ENCODE measurements at regions of chr2 and their contacts with region 1.

Region 1: GRCh38 chr2:10448208-10448645 is at the start of gene ODC1:
- DNase-seq: peak; percentile 97 to 98 (median 98)
- ATAC-seq: peak; percentile 87 to 94
- H3K4me3 ChIP-seq: peak within 1 kb of the TSS; percentile 80
- H3K27ac ChIP-seq: peak within 1 kb of the TSS; percentile 89
- H3K4me1 ChIP-seq: peaks cover 2% of the 10 kb centered on the region
- H3K27me3 ChIP-seq: no peaks in the 10 kb centered on the region
- total RNA-seq, gene ODC1: 35.2 to 47.9 (median 39.8) TPM

Region 2: DNA sequence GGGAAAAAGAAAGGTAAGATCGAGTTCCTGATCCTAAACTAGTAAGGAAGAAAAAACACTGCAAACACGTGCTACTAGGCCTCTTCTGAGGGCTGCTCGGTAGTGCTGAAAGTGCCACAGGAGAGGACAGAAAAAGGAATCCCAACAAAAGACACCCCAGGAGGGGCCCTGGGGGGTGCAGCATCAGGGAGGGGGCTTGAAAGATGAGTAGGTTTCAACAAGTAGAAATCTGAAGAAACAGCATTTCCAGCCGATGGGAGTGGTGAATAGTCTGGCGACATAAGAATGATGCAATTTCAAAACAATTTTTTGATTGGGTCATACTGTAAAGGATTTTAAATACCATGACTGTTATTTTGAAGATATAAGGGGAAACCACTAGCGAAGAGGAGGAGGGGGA is 143.0 kb after region 1 on chr2:
- intact Hi-C with region 1: no loop called
- DNase-seq: no peak
- ATAC-seq: no peak
- H3K4me3 ChIP-seq: no peak overlapping the region
- H3K27ac ChIP-seq: no peak overlapping the region
- H3K4me1 ChIP-seq: no peaks in the 10 kb centered on the region
- H3K27me3 ChIP-seq: no peaks in the 10 kb centered on the region

Region 3: GRCh38 chr2:10659898-10660568 is 211.8 kb after region 1 on chr2:
- intact Hi-C with region 1: loop called in 1 of 4 experiments (anchors 10 kb)
- DNase-seq: peak; percentile 42 to 69 (median 67)
- ATAC-seq: peak; percentile 71 to 94
- H3K4me3 ChIP-seq: no peak overlapping the region
- H3K27ac ChIP-seq: no peak overlapping the region
- H3K4me1 ChIP-seq: no peaks in the 10 kb centered on the region
- H3K27me3 ChIP-seq: no peaks in the 10 kb centered on the region